ENCODE measurements at regions of chr6 and their contacts with region 1.

Region 1: DNA sequence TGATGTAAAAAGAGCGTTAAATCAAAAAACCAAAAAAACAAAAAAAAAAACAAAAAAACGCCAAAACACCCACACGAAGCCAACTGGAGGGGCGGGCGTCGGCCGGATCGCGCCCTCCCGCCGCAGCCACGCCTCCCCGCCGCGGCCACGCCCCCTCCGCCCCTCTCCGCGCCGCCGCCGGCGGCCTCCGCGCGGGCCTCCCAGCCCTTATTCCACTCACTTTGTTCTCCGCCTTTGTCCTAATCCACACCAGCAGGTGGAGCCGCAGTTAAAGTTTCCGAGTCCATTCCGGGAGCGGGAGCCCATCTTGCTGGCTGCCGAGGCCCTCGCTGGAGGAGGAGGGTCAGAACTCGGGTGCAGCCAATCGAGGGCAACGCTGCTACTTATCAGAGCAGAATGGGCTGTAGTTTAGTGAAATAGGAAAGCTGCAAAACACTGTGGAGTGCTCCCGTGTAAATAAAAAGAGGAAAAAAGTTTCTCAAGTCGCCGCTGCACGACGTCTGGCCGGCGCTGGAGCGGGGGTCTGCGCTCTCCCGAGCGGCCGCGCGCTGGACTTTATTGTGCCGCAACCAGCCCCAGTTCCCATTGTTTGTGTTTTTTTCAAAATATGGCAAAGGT is at the start of gene ASF1A:
- DNase-seq: peak; percentile 94 to 98 (median 97)
- ATAC-seq: peak; percentile 90
- H3K4me3 ChIP-seq: peak within 1 kb of the TSS; percentile 77
- H3K4me3 Mint-ChIP-seq: peak within 1 kb of the TSS; percentile 88 to 97 (median 94)
- H3K27ac ChIP-seq: peak within 1 kb of the TSS; percentile 91
- H3K27ac Mint-ChIP-seq: peak within 1 kb of the TSS; percentile 96 to 99 (median 99)
- H3K4me1 ChIP-seq: peaks cover 47 to 52% of the 10 kb centered on the region in 2 donors
- H3K4me1 Mint-ChIP-seq: peaks cover 39 to 76% (median 69%) of the 10 kb centered on the region in 7 donors
- H3K27me3 ChIP-seq: no peaks in the 10 kb centered on the region
- H3K27me3 Mint-ChIP-seq: peaks cover 0 to 2% (median 0%) of the 10 kb centered on the region in 5 donors
- total RNA-seq, gene ASF1A: 16.5 to 63.9 (median 35.7) TPM

Region 2: DNA sequence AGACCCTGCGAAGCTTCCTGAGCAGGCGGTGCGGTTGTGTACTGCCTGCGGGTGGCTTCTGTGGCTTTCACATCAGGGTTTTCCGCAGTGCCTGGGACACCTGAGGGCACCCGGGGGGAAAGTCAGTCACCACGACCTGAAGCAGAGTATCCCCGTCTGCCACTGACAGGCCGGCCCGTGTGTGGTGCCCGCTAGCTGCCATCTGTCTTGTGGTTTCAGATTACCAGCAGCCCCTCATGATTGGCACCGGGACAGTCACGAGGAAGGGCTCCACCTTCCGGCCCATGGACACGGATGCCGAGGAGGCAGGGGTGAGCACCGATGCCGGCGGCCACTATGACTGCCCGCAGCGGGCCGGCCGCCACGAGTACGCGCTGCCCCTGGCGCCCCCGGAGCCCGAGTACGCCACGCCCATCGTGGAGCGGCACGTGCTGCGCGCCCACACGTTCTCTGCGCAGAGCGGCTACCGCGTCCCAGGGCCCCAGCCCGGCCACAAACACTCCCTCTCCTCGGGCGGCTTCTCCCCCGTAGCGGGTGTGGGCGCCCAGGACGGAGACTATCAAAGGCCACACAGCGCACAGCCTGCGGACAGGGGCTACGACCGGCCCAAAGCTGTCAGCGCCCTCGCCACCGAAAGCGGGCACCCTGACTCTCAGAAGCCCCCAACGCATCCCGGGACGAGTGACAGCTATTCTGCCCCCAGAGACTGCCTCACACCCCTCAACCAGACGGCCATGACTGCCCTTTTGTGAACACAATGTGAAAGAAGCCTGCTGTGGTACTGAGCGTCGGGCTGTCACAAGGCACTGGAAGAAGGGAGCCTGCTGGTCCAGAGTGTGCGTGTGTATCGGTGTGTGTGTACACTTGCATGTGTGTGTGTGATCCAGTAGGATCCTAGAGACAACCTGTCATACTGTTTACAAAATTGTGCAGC is 1346.0 kb before region 1 on chr6:
- CTCF ChIA-PET with region 1: no interaction called
- POLR2A ChIA-PET with region 1: no interaction called
- intact Hi-C with region 1: loop called in 1 of 2 experiments (anchors 5 kb)
- DNase-seq: peak; percentile 20 to 57 (median 37)
- ATAC-seq: peak; percentile 60
- H3K4me3 ChIP-seq: peak overlapping the region; percentile 75
- H3K4me3 Mint-ChIP-seq: peak overlapping the region; percentile 81 to 90 (median 86)
- H3K27ac ChIP-seq: peak overlapping the region; percentile 45
- H3K27ac Mint-ChIP-seq: peak overlapping the region; percentile 79 to 95 (median 87)
- H3K4me1 ChIP-seq: peaks cover 18 to 37% of the 10 kb centered on the region in 2 donors
- H3K4me1 Mint-ChIP-seq: peaks cover 28 to 44% (median 41%) of the 10 kb centered on the region in 7 donors
- H3K27me3 ChIP-seq: no peaks in the 10 kb centered on the region
- H3K27me3 Mint-ChIP-seq: peaks cover 0 to 9% (median 0%) of the 10 kb centered on the region in 5 donors

Region 3: DNA sequence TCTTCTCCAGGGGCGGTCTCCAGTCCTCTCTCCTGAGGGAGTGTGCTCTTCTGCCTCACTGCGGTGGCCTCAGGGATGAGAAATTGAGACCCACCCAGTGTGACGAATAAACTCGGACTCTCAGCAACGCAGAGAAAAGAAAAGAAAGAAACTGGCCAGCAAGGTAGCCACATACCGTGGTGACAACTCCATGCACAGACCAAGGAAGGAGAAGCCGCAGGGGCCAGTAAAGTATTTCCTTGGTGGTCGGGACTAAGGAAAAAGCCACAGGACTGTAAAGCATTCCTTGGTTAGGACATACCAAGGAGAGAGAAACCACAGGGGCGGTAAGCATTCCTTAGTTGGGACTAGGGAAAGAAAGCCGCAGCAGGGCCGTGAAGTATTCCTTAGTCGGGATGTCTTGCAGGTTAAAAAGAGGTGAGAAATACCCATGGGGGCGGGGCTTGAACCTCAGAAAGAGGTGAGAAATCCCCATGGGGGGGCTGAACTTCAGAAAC is 1278.0 kb before region 1 on chr6:
- CTCF ChIA-PET with region 1: no interaction called
- POLR2A ChIA-PET with region 1: no interaction called
- intact Hi-C with region 1: no loop called
- DNase-seq: no peak
- ATAC-seq: no peak
- H3K4me3 ChIP-seq: no peak overlapping the region
- H3K4me3 Mint-ChIP-seq: no peak overlapping the region
- H3K27ac ChIP-seq: no peak overlapping the region
- H3K27ac Mint-ChIP-seq: no peak overlapping the region
- H3K4me1 ChIP-seq: peaks cover 0 to 15% of the 10 kb centered on the region in 2 donors
- H3K4me1 Mint-ChIP-seq: peaks cover 11 to 36% (median 15%) of the 10 kb centered on the region in 7 donors
- H3K27me3 ChIP-seq: peaks cover 0 to 5% of the 10 kb centered on the region in 2 donors
- H3K27me3 Mint-ChIP-seq: peaks cover 5 to 13% (median 7%) of the 10 kb centered on the region in 5 donors

Region 4: DNA sequence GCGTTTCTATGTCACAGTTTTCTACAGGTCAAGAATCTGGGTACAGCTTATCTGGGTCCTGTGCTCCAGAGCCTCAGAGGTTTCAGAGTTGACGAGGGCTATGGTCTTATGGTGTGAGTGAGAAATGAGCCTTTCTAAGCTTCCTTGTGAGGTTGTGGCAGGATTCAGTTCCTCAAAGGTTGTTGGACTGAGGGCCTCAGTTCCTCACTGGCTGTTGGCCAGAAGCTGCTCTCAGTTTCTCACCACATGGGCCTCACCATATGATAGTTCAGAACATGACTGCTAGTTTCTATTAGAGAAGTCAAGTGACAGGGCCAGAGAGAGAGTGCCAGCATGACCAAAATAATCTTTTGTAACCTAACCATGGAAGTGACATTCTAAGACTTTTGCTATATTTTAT is 1122.5 kb before region 1 on chr6:
- CTCF ChIA-PET with region 1: no interaction called
- POLR2A ChIA-PET with region 1: no interaction called
- intact Hi-C with region 1: no loop called
- DNase-seq: no peak
- ATAC-seq: peak; percentile 36
- H3K4me3 ChIP-seq: no peak overlapping the region
- H3K4me3 Mint-ChIP-seq: no peak overlapping the region
- H3K27ac ChIP-seq: no peak overlapping the region
- H3K27ac Mint-ChIP-seq: no peak overlapping the region
- H3K4me1 ChIP-seq: no peaks in the 10 kb centered on the region
- H3K4me1 Mint-ChIP-seq: peaks cover 0 to 2% (median 0%) of the 10 kb centered on the region in 7 donors
- H3K27me3 ChIP-seq: no peaks in the 10 kb centered on the region
- H3K27me3 Mint-ChIP-seq: peaks cover 0 to 14% (median 4%) of the 10 kb centered on the region in 5 donors

Region 5: DNA sequence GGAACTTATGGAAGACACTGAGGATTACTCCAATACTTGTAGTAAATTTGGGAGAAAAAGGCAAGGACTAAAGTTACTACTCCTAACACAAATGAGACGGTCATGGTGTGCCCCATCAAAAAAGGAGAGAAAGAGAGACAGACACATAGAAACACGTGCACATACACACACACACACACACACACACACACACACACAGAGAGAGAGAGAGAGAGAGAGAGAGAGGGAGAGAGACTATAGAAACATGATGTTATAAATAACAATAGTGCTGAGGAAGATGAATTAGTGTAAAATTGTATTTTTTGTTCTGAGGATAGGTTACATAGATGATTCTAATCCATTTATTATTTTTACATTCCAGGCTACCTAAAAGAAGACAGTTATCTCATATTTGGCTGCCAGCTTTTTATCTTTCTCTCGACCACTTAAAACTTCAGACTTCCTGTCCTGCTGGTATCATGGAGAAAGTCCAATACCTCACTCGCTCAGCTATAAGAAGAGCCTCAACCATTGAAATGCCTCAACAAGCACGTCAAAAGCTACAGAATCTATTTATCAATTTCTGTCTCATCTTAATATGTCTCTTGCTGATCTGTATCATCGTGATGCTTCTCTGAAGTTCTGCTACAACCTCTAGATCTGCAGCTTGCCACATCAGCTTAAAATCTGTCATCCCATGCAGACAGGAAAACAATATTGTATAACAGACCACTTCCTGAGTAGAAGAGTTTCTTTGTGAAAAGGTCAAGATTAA is 335.3 kb before region 1 on chr6:
- CTCF ChIA-PET with region 1: no interaction called
- POLR2A ChIA-PET with region 1: interaction called, 19 read pairs
- intact Hi-C with region 1: loop called in 1 of 2 experiments (anchors 1 kb)
- DNase-seq: peak in 7 of 9 donors; percentile 58 to 81 (median 72)
- ATAC-seq: peak; percentile 95
- H3K4me3 ChIP-seq: peak overlapping the region; percentile 15
- H3K4me3 Mint-ChIP-seq: peak overlapping the region; percentile 39 to 90 (median 81)
- H3K27ac ChIP-seq: peak overlapping the region; percentile 74
- H3K27ac Mint-ChIP-seq: peak overlapping the region; percentile 93 to 99 (median 96)
- H3K4me1 ChIP-seq: peaks cover 19 to 25% of the 10 kb centered on the region in 2 donors
- H3K4me1 Mint-ChIP-seq: peaks cover 17 to 71% (median 50%) of the 10 kb centered on the region in 7 donors
- H3K27me3 ChIP-seq: no peaks in the 10 kb centered on the region
- H3K27me3 Mint-ChIP-seq: peaks cover 0 to 2% (median 0%) of the 10 kb centered on the region in 5 donors

Region 6: GRCh38 chr6:118776607-118777549 is 117.0 kb before region 1 on chr6:
- CTCF ChIA-PET with region 1: interaction called, 3 read pairs
- POLR2A ChIA-PET with region 1: interaction called, 3 read pairs
- intact Hi-C with region 1: loop called in 1 of 2 experiments (anchors 1 kb)
- DNase-seq: peak in 8 of 9 donors; percentile 42 to 77 (median 65)
- ATAC-seq: peak; percentile 92
- H3K4me3 ChIP-seq: no peak overlapping the region
- H3K4me3 Mint-ChIP-seq: peak overlapping the region; percentile 1 to 75 (median 48)
- H3K27ac ChIP-seq: no peak overlapping the region
- H3K27ac Mint-ChIP-seq: peak overlapping the region in 8 of 9 donors; percentile 12 to 87 (median 75)
- H3K4me1 ChIP-seq: peaks cover 4 to 11% of the 10 kb centered on the region in 2 donors
- H3K4me1 Mint-ChIP-seq: peaks cover 16 to 31% (median 23%) of the 10 kb centered on the region in 7 donors
- H3K27me3 ChIP-seq: no peaks in the 10 kb centered on the region
- H3K27me3 Mint-ChIP-seq: peaks cover 0 to 17% (median 0%) of the 10 kb centered on the region in 5 donors

Region 7: DNA sequence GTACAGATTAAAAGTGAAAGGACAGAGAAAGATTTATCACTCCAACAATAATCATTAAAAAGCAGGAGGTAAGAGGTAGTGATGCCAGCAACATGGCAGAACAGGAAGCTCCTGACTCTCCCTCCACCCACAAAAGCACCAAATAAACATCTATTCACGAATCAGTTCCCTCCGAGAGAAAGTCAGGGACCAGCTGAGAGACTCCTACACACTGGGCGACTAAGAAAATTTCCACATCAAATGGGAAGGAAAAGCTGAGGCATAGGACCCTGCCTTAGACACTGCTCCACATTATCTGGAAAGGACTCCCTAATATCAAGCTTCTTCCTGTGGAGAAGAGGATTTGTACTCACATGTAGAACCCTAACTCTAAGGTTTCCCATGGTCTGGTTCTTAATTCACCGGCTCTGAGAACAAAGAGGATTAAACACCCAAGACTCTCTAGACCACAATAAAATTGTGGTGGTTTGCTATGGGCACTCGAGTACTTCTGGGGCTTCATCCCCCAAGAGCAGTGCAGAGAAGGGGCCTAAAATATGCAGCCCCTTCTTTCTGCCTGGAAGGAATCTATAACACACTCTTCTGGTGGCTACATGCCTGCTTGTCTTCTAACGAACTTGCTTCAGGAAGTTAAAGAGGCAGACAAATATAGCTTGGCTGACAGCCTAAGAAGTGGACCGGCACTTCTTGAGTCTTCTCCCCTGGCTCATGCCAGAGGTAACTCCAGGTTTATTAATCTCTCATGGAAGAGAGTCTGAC is 29.4 kb before region 1 on chr6:
- CTCF ChIA-PET with region 1: interaction called, 5 read pairs
- POLR2A ChIA-PET with region 1: interaction called, 12 read pairs
- intact Hi-C with region 1: no loop called
- DNase-seq: peak in 2 of 9 donors; percentile 8 to 15
- ATAC-seq: peak; percentile 47
- H3K4me3 ChIP-seq: peak overlapping the region; percentile 15
- H3K4me3 Mint-ChIP-seq: peak overlapping the region; percentile 67 to 86 (median 76)
- H3K27ac ChIP-seq: no peak overlapping the region
- H3K27ac Mint-ChIP-seq: peak overlapping the region; percentile 11 to 93 (median 78)
- H3K4me1 ChIP-seq: peaks cover 0 to 12% of the 10 kb centered on the region in 2 donors
- H3K4me1 Mint-ChIP-seq: peaks cover 28 to 65% (median 56%) of the 10 kb centered on the region in 7 donors
- H3K27me3 ChIP-seq: no peaks in the 10 kb centered on the region
- H3K27me3 Mint-ChIP-seq: no peaks in the 10 kb centered on the region

Region 8: GRCh38 chr6:118963003-118963402 is 69.1 kb after region 1 on chr6:
- CTCF ChIA-PET with region 1: no interaction called
- POLR2A ChIA-PET with region 1: no interaction called
- intact Hi-C with region 1: loop called in 1 of 2 experiments (anchors 1 kb)
- DNase-seq: peak in 4 of 9 donors; percentile 6 to 20 (median 12)
- ATAC-seq: no peak
- H3K4me3 ChIP-seq: no peak overlapping the region
- H3K4me3 Mint-ChIP-seq: no peak overlapping the region
- H3K27ac ChIP-seq: no peak overlapping the region
- H3K27ac Mint-ChIP-seq: no peak overlapping the region
- H3K4me1 ChIP-seq: no peaks in the 10 kb centered on the region
- H3K4me1 Mint-ChIP-seq: peaks cover 0 to 14% (median 7%) of the 10 kb centered on the region in 7 donors
- H3K27me3 ChIP-seq: no peaks in the 10 kb centered on the region
- H3K27me3 Mint-ChIP-seq: no peaks in the 10 kb centered on the region

Region 9: GRCh38 chr6:119463081-119463626 is 569.2 kb after region 1 on chr6:
- CTCF ChIA-PET with region 1: no interaction called
- POLR2A ChIA-PET with region 1: no interaction called
- intact Hi-C with region 1: loop called in 1 of 2 experiments (anchors 10 kb)
- DNase-seq: no peak
- ATAC-seq: no peak
- H3K4me3 ChIP-seq: no peak overlapping the region
- H3K4me3 Mint-ChIP-seq: peak overlapping the region in 1 of 10 donors; percentile 59
- H3K27ac ChIP-seq: no peak overlapping the region
- H3K27ac Mint-ChIP-seq: peak overlapping the region in 1 of 9 donors; percentile 94
- H3K4me1 ChIP-seq: no peaks in the 10 kb centered on the region
- H3K4me1 Mint-ChIP-seq: peaks cover 0 to 61% (median 4%) of the 10 kb centered on the region in 7 donors
- H3K27me3 ChIP-seq: no peaks in the 10 kb centered on the region
- H3K27me3 Mint-ChIP-seq: no peaks in the 10 kb centered on the region